Endothelial cell of umbilical vein (primary cell): ENCODE measurements at regions of chr1 and their contacts with region 1.

Region 1: DNA sequence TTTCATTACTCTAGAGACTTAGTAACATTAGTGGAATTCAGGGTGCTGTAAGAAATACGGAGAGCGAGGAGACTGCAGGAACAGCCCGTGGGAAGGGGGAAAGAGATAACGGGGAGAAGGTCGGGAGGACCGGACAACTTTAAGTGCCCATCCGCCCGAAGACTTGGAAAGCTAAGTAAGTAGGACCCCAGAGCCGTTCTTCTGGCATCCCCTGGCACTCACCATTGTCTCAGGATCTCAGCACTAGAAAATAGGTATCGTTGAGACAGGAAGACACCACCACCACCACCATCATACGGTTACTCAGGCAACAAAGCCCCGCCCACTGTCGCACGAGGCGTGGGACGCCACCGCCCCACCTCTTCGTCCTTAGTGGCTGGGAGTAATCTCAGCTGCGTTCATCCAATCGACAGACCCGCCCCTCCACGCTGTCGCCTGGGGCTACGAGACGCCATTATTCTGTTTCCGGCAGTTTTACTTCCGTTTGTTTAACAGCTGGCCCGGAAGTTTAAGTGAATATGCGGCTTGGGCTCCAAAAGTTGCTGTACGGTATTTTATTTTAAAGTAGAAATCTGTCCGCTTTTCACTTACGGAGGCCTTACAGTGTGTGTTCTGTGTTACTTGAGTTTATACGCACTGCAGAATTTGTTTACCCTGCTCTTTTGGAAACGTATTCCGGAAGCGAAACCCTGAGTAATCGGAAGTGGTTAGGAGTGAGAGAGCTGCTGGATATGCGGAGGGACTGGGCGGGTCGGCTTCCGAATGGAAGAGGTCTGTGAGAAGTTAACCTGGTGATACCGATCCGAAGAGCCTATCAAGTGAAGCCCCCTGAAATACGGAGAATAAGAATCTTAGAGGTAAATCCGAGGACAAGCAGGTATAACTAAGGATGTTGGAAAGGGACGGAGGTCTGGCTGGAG is at the starts of genes BLZF1 and NME7:
- DNase-seq: peak; percentile 98
- H3K4me3 ChIP-seq: peak within 1 kb of the TSS; percentile 97 to 100 (median 98)
- H3K27ac ChIP-seq: peak within 1 kb of the TSS; percentile 96
- H3K4me1 ChIP-seq: peaks cover 19% of the 10 kb centered on the region
- H3K27me3 ChIP-seq: no peaks in the 10 kb centered on the region
- CTCF ChIP-seq: no peak
- POLR2A ChIP-seq: peak; percentile 84
- total RNA-seq, gene BLZF1: 19.7 and 21.2 TPM in 2 replicates
- total RNA-seq, gene NME7: 25.0 and 25.3 TPM in 2 replicates

Region 2: DNA sequence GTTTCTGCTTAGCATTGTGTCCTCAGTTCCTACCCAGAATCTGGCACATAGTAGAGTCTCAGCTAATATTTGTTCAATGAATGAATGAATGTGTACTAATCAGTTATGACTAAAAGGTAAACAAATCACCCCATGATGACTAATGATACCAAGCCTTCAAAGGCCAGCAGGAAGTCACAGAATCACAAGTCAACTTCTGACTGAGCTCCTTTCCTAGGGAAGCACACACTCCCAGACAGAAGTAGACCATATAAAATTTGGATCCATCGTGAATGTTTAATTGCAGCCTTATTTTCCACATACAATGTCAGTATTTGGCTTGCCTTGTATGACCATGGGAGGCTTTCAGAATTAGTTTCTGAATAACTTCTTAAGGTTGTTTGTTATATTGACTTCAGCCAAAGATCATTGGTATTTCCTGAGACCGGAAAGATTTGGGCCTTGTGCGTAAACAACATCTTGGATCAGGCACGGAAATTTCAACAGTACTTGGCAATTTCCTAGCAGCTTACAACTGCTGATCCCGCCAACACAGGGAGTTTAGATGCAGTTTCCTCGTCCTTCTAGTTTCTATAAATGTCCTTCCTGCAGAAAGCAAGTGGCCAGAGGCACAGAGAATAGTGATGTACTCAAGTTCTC is 447.2 kb before region 1 on chr1:
- CTCF ChIA-PET with region 1: no interaction called
- POLR2A ChIA-PET with region 1: no interaction called
- dilution Hi-C with region 1: no loop called
- intact Hi-C with region 1: loop called (anchors 1 kb)
- DNase-seq: peak; percentile 90
- H3K4me3 ChIP-seq: peak overlapping the region in 1 of 3 experiments; percentile 21
- H3K27ac ChIP-seq: peak overlapping the region; percentile 84
- H3K4me1 ChIP-seq: peaks cover 59% of the 10 kb centered on the region
- H3K27me3 ChIP-seq: no peaks in the 10 kb centered on the region
- CTCF ChIP-seq: no peak
- POLR2A ChIP-seq: no peak

Region 3: DNA sequence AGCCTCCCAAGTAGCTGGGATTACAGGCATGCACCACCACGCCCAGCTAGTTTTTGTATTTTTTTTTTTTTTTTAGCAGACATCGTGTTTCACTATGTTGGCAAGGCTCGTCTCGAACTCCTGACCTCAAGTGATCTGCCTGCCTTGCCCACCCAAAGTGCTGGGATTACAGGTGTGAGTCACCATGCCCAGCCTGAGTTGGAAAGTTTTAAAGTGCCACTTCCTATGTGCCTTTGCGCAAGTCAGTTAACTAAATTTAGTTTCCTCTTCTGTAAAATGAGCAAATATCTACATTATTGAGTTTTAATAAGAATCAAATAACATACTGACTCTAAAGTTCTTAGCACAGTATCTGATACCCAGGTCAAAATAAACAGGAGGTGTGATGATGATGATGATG is 105.6 kb after region 1 on chr1:
- CTCF ChIA-PET with region 1: no interaction called
- POLR2A ChIA-PET with region 1: no interaction called
- dilution Hi-C with region 1: no loop called
- intact Hi-C with region 1: loop called (anchors 5 kb)
- DNase-seq: no peak
- H3K4me3 ChIP-seq: no peak overlapping the region
- H3K27ac ChIP-seq: no peak overlapping the region
- H3K4me1 ChIP-seq: no peaks in the 10 kb centered on the region
- H3K27me3 ChIP-seq: no peaks in the 10 kb centered on the region
- CTCF ChIP-seq: no peak
- POLR2A ChIP-seq: no peak